ENCODE measurements at regions of chr17 and their contacts with region 1.

Region 1: GRCh38 chr17:49556223-49556971 is 19.3 kb upstream of the NXPH3 start:
- DNase-seq: peak; percentile 73 to 80
- H3K4me3 ChIP-seq: no peak overlapping the region
- H3K27ac ChIP-seq: no peak overlapping the region
- H3K4me1 ChIP-seq: peaks cover 0 to 7% of the 10 kb centered on the region in 2 donors
- H3K27me3 ChIP-seq: no peaks in the 10 kb centered on the region
- CTCF ChIP-seq: peak; percentile 86 to 96 (median 95)
- POLR2A ChIP-seq: no peak

Region 2: GRCh38 chr17:49305926-49306325 is 250.5 kb before region 1 on chr17:
- intact Hi-C with region 1: no loop called
- DNase-seq: no peak
- H3K4me3 ChIP-seq: no peak overlapping the region
- H3K27ac ChIP-seq: no peak overlapping the region
- H3K4me1 ChIP-seq: no peaks in the 10 kb centered on the region
- H3K27me3 ChIP-seq: no peaks in the 10 kb centered on the region
- CTCF ChIP-seq: no peak
- POLR2A ChIP-seq: no peak

Region 3: GRCh38 chr17:49496183-49496866 is 60.1 kb before region 1 on chr17:
- intact Hi-C with region 1: loop called (anchors 5 kb)
- DNase-seq: peak in 1 of 2 donors; percentile 79
- H3K4me3 ChIP-seq: peak overlapping the region; percentile 40 to 84 (median 66)
- H3K27ac ChIP-seq: peak overlapping the region; percentile 66 to 70
- H3K4me1 ChIP-seq: peaks cover 7 to 10% of the 10 kb centered on the region in 2 donors
- H3K27me3 ChIP-seq: peaks cover 0 to 43% of the 10 kb centered on the region in 2 donors
- CTCF ChIP-seq: peak; percentile 69 to 79 (median 70)
- POLR2A ChIP-seq: no peak

Region 4: DNA sequence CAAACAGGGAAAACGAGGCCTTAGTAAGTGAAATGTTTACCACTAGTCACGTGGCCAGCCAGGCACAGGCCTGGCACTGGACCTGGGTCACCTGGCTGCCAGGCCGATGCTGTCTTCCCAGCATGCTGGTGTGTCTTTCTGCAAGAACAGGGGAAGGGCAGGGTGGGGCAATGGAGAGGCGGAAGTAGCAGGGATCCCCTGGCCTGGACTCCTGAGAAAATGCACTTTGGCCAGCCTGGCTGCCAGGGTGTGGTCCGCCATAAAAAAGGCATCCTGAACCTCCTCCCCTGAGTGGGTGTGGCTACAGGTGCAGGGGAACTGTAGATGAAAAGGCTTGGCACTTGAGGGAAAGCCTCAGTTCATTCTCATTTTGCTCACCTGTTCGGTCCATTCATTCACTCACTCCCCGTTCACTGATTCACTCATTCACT is 1212.0 kb after region 1 on chr17:
- intact Hi-C with region 1: no loop called
- DNase-seq: peak; percentile 49 to 57
- H3K4me3 ChIP-seq: no peak overlapping the region
- H3K27ac ChIP-seq: no peak overlapping the region
- H3K4me1 ChIP-seq: no peaks in the 10 kb centered on the region
- H3K27me3 ChIP-seq: no peaks in the 10 kb centered on the region
- CTCF ChIP-seq: no peak
- POLR2A ChIP-seq: no peak